Activated CD4-positive, alpha-beta memory T cell treated with anti-CD3 and anti-CD28 coated beads, Interleukin-2, amount 10 ng/mL, durations not matched to agents 7 days and 5 days (primary cell): ENCODE measurements at regions of chr1 and their contacts with region 1.

Region 1: DNA sequence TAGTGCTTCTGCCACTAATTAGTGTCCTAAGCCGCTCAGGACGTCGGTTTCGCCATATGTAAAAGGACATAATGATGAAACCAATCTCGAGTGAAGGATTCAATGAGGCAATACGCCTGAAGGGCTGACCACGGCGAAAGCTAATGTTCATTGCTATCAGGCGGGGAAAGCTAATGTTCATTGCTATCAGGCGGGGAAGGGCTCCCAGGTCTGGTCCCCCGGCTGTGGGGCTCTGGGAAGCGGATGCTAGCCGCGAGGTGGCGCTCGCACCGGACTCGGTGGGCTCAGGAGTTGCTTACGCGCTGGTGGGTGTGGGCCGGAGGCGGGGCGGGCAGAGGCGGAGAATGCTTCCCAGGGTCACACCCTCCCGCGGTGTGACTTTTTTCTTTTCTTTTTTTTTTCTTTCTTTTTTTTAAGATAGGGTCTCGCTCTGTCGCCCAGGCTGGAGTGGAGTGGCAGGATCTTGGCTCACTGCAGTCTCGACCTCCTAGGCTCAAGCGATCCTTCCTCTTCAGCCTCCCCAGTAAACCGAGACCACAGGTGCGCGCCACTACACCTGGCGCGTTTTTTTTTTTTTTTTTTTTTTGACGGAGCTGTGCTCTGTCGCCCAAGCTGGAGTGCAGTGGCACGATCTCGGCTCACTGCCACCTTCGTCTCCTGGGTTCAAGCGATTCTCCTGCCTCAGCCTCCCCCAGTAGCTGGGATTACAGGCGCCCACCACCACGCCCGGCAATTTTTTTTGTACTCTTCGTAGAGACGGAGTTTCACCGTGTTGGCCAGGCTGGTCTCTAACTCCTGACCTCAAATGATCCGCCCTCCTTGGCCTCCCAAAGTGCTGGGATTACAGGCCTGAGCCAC is 1.1 kb upstream of the PEAR1 start:
- DNase-seq: peak; percentile 87
- H3K4me3 Mint-ChIP-seq: peak overlapping the region; percentile 49
- H3K27ac Mint-ChIP-seq: no peak overlapping the region
- H3K4me1 Mint-ChIP-seq: peaks cover 22% of the 10 kb centered on the region
- H3K27me3 Mint-ChIP-seq: peaks cover 56% of the 10 kb centered on the region

Region 2: GRCh38 chr1:156689035-156689952 is 203.1 kb before region 1 on chr1:
- CTCF ChIA-PET with region 1: interaction called, 57 read pairs
- POLR2A ChIA-PET with region 1: no interaction called
- DNase-seq: peak; percentile 76
- H3K4me3 Mint-ChIP-seq: no peak overlapping the region
- H3K27ac Mint-ChIP-seq: no peak overlapping the region
- H3K4me1 Mint-ChIP-seq: peaks cover 21% of the 10 kb centered on the region
- H3K27me3 Mint-ChIP-seq: peaks cover 65% of the 10 kb centered on the region

Region 3: GRCh38 chr1:156797212-156797871 is 95.1 kb before region 1 on chr1:
- CTCF ChIA-PET with region 1: interaction called, 112 read pairs
- POLR2A ChIA-PET with region 1: interaction called, 7 read pairs
- DNase-seq: peak; percentile 70
- H3K4me3 Mint-ChIP-seq: no peak overlapping the region
- H3K27ac Mint-ChIP-seq: no peak overlapping the region
- H3K4me1 Mint-ChIP-seq: peaks cover 24% of the 10 kb centered on the region
- H3K27me3 Mint-ChIP-seq: no peaks in the 10 kb centered on the region

Region 4: DNA sequence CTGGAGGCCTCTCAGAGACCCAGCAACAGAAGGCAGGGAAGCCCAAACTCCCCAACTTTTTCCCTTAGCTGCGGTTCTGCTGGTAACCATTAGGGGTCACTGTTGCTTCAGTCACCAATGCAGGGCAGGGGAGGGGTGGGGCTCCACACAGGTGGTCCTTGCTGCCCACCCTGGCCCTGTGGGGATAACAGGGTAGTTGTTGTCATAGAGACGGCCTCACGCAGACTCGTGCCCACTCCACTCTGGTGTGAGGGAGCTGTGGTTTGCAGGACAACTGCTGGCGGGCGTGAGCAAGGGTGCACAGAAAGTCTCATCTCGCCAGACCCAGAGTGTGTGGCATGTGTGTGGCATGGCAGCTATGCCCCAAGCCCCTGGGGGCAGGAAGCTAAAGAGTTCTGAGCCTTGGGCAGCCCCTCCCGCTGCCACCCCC is 53.4 kb before region 1 on chr1:
- CTCF ChIA-PET with region 1: interaction called, 67 read pairs
- POLR2A ChIA-PET with region 1: interaction called, 5 read pairs
- DNase-seq: peak; percentile 57
- H3K4me3 Mint-ChIP-seq: no peak overlapping the region
- H3K27ac Mint-ChIP-seq: no peak overlapping the region
- H3K4me1 Mint-ChIP-seq: peaks cover 41% of the 10 kb centered on the region
- H3K27me3 Mint-ChIP-seq: peaks cover 44% of the 10 kb centered on the region

Region 5: DNA sequence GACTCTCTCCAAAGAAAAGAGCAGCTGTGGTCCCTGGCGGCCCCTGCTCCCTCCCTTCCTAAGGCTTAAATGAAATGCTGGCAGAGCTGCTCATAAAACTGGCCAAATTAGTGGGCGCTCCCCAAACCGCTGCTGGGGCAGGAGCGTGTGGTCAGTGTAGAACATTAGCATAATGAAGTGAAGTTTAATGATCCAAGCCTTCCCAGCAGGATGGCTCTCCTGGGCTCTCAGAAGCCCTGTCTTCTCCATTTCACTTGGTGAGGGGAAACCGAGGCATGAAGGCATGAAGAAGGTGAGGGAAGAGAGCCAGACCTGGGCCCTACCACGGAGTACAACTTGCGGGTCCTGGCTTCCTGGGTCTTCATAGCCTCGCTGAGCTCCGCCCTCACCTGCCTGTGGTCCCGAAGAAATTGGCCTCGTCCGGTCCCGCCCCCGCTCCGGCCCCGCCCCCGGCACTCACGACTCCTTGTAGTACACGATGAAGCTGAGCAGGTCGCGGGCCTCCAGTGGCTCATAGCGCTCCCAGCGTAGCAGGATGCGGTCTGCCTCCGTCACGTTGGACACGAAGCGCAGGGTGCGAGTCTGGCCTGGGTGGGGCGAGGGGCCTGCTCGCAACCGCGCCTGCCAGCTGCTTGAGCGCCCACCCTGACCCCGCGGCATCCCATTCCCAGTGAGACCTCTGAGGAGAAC is 43.8 kb before region 1 on chr1:
- CTCF ChIA-PET with region 1: interaction called, 10 read pairs
- POLR2A ChIA-PET with region 1: no interaction called
- DNase-seq: peak; percentile 85
- H3K4me3 Mint-ChIP-seq: peak overlapping the region; percentile 40
- H3K27ac Mint-ChIP-seq: peak overlapping the region; percentile 20
- H3K4me1 Mint-ChIP-seq: peaks cover 32% of the 10 kb centered on the region
- H3K27me3 Mint-ChIP-seq: peaks cover 64% of the 10 kb centered on the region

Region 6: DNA sequence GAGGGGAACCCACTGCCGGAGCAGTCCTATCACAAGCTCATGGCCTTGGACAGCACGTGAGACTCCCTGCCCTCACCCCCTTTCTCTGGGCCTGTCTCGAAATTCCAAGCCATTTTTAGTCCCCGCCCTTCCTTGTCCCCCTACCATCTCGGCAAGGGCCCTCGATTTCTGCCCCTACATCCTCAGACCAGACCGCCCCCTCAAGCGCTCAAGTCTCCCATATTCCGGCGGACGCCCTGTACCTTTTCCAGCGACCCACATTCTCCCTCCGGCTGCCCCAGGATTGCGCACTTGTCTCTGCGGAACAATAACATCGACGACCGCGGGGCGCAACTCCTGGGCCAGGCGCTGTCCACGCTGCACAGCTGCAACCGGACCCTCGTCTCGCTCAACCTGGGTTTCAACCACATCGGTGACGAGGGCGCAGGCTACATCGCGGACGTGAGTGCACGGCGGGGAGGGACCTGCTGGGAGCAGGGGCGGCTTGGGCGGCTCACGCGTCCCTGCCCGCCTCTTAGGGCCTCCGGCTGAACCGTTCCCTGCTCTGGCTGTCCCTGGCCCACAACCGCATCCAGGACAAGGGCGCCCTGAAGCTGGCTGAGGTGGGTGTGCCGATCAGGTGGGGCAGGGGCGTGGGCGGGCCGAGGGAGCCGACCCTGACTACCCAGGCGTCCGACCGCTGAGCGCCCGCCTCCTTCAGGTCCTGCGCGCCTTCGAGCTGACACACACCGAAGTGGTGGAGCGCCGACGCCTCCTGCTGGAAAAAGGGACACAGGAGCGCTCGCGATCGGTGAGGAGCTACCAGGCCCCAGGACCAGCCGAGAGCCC is 35.0 kb after region 1 on chr1:
- CTCF ChIA-PET with region 1: interaction called, 45 read pairs
- POLR2A ChIA-PET with region 1: interaction called, 3 read pairs
- DNase-seq: peak; percentile 71
- H3K4me3 Mint-ChIP-seq: no peak overlapping the region
- H3K27ac Mint-ChIP-seq: no peak overlapping the region
- H3K4me1 Mint-ChIP-seq: peaks cover 22% of the 10 kb centered on the region
- H3K27me3 Mint-ChIP-seq: peaks cover 86% of the 10 kb centered on the region